ENCODE measurements at regions of chr6 and their contacts with region 1.

Region 1: GRCh38 chr6:48826901-48827701 is 636.0 kb downstream of the MMUT start:
- DNase-seq: peak; percentile 89 to 98
- H3K4me3 ChIP-seq: peak overlapping the region; percentile 37; the same call in 1 of the 2 replicates
- H3K27ac ChIP-seq: peak overlapping the region; percentile 99
- H3K4me1 ChIP-seq: peaks cover 32% of the 10 kb centered on the region
- H3K27me3 ChIP-seq: no peaks in the 10 kb centered on the region
- CTCF ChIP-seq: no peak

Region 2: DNA sequence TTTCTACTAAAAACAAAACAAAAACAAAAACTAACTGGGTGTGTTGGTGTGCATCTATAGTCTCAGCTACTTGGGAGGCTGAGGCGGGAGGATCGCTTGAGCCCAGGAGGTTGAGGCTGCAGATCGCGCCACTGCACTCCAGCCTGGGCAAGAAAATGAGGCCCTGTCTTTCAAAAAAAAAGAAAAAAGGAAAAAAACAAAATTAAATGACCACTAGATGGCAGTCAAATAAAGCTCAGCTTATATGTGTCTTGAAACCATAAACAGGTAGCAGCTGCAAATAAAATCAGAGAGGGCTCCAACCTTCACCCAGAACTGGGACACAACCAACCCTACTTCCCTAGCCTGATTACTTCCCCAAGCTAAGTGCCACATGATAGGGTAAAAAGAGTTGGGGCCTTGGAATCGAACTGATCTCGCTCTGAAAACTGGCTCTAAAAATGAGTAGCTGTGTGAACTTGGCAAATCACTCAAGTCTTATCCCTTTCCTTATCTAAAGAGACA is 1195.8 kb before region 1 on chr6:
- CTCF ChIA-PET with region 1: no interaction called
- POLR2A ChIA-PET with region 1: no interaction called
- intact Hi-C with region 1: loop called (anchors 10 kb)
- DNase-seq: peak; percentile 18 to 70
- H3K4me3 ChIP-seq: no peak overlapping the region
- H3K27ac ChIP-seq: no peak overlapping the region
- H3K4me1 ChIP-seq: peaks cover 5% of the 10 kb centered on the region
- H3K27me3 ChIP-seq: no peaks in the 10 kb centered on the region
- CTCF ChIP-seq: peak; percentile 89

Region 3: GRCh38 chr6:47787620-47788497 is 1039.2 kb before region 1 on chr6:
- CTCF ChIA-PET with region 1: no interaction called
- POLR2A ChIA-PET with region 1: no interaction called
- intact Hi-C with region 1: loop called (anchors 2 kb)
- DNase-seq: peak; percentile 43 to 51
- H3K4me3 ChIP-seq: no peak overlapping the region
- H3K27ac ChIP-seq: no peak overlapping the region
- H3K4me1 ChIP-seq: no peaks in the 10 kb centered on the region
- H3K27me3 ChIP-seq: no peaks in the 10 kb centered on the region
- CTCF ChIP-seq: peak; percentile 96

Region 4: DNA sequence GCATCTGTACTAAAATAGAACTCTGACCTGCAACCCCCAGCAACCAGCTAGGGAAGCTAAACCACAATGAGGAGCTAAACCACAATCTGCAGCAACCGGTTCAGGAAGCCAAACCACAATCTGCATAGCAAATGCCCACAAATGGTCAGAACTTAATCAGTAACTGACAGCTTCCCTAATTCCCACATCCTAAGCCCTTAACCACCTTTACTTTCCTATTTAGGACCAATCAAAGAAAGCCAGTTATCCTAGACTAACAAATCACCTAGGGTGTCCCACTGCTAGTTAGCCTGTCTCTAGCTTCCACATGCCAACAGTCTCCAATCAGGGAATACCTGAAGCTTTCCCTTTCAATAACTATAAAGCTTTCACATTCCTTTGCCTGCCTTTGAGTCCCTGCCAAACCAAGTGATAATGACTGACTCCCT is 291.5 kb before region 1 on chr6:
- CTCF ChIA-PET with region 1: no interaction called
- POLR2A ChIA-PET with region 1: no interaction called
- intact Hi-C with region 1: loop called (anchors 1 kb)
- DNase-seq: peak; percentile 50 to 71
- H3K4me3 ChIP-seq: no peak overlapping the region
- H3K27ac ChIP-seq: no peak overlapping the region
- H3K4me1 ChIP-seq: peaks cover 15% of the 10 kb centered on the region
- H3K27me3 ChIP-seq: 0 out of 2 replicates have a peak, but pooled peaks cover 4% of the 10 kb centered on the region
- CTCF ChIP-seq: no peak

Region 5: DNA sequence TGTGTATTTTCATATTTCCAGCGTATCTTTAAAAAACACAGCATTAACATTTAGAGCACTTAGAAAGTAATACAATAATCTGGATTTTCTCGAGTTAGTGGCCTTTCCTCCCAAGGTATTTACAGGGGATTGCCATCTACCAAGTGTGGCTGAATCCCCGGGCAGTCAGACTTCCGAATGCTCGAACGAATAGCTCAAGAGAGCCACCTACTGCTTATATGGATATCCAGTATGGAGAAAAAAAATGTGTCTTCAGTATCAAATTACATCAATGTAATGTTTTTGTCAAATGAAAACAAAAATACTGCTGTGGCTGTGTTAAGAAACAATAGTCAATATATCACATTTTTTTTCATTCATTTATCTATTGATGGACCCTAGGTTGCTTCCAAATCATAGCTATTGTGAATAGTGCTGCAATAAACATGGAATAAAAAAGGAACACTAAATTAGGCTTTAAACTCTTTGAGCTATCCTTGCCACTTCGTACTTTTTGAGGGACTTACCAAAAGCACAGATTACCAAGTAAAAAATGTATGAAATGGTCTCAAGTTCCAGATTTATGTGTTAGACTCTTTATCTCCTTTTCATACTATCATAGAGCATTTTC is 61.6 kb before region 1 on chr6:
- CTCF ChIA-PET with region 1: no interaction called
- POLR2A ChIA-PET with region 1: no interaction called
- intact Hi-C with region 1: loop called (anchors 2 kb)
- DNase-seq: peak; percentile 25 to 39
- H3K4me3 ChIP-seq: no peak overlapping the region
- H3K27ac ChIP-seq: peak overlapping the region; percentile 18; the same call in 1 of the 2 replicates
- H3K4me1 ChIP-seq: peaks cover 17% of the 10 kb centered on the region
- H3K27me3 ChIP-seq: no peaks in the 10 kb centered on the region
- CTCF ChIP-seq: peak; percentile 69

Region 6: DNA sequence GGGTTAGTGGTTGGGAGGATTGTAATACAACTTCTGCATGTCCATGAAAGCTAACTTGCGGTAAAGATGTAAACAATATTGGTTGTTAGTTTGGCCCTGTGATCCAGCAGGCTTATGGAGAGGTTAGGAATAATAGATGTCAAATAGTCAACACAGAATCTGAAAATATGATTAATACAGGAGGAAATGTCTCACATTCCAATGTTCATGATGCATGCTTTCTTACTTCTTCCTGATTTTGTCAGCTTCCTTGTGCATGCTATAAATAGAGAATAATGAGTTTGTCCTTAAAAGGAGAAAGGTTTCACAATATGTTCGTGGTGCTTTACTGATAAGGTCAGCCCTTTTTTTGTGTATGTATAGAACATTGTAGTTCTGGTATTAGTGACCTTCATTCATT is 499.2 kb after region 1 on chr6:
- CTCF ChIA-PET with region 1: no interaction called
- POLR2A ChIA-PET with region 1: no interaction called
- intact Hi-C with region 1: loop called (anchors 1 kb)
- DNase-seq: peak in 1 of 2 experiments; percentile 83
- H3K4me3 ChIP-seq: no peak overlapping the region
- H3K27ac ChIP-seq: peak overlapping the region; percentile 68
- H3K4me1 ChIP-seq: peaks cover 26% of the 10 kb centered on the region
- H3K27me3 ChIP-seq: no peaks in the 10 kb centered on the region
- CTCF ChIP-seq: no peak

Region 7: GRCh38 chr6:49409951-49410542 is 582.9 kb after region 1 on chr6:
- CTCF ChIA-PET with region 1: no interaction called
- POLR2A ChIA-PET with region 1: no interaction called
- intact Hi-C with region 1: loop called (anchors 10 kb)
- DNase-seq: peak in 1 of 2 experiments; percentile 64
- H3K4me3 ChIP-seq: no peak overlapping the region
- H3K27ac ChIP-seq: no peak overlapping the region
- H3K4me1 ChIP-seq: peaks cover 5% of the 10 kb centered on the region; the same call in 1 of the 2 replicates
- H3K27me3 ChIP-seq: no peaks in the 10 kb centered on the region
- CTCF ChIP-seq: peak; percentile 93